ENCODE measurements at regions of chr1 and their contacts with region 1.

Region 1: GRCh38 chr1:163174524-163175437 is 27.9 kb downstream of the RGS5 start:
- DNase-seq: peak; percentile 73 to 76
- ATAC-seq: peak in 7 of 8 donors; percentile 68 to 80 (median 72)
- H3K4me3 ChIP-seq: peak overlapping the region in 6 of 10 donors; percentile 4 to 46 (median 21)
- H3K27ac ChIP-seq: peak overlapping the region in 8 of 10 donors; percentile 17 to 69 (median 52)
- H3K4me1 ChIP-seq: peaks cover 0 to 51% (median 8%) of the 10 kb centered on the region in 9 donors
- H3K27me3 ChIP-seq: no peaks in the 10 kb centered on the region
- CTCF ChIP-seq: peak; percentile 59 to 93 (median 88)

Region 2: GRCh38 chr1:162847839-162848453 is 326.8 kb before region 1 on chr1:
- intact Hi-C with region 1: loop called in 3 of 10 experiments (anchors 2 to 5 kb)
- DNase-seq: peak; percentile 75 to 77
- ATAC-seq: peak in 1 of 8 donors; percentile 39
- H3K4me3 ChIP-seq: no peak overlapping the region
- H3K27ac ChIP-seq: no peak overlapping the region
- H3K4me1 ChIP-seq: no peaks in the 10 kb centered on the region
- H3K27me3 ChIP-seq: peaks cover 0 to 3% (median 0%) of the 10 kb centered on the region in 7 donors
- CTCF ChIP-seq: peak; percentile 80 to 95 (median 92)

Region 3: DNA sequence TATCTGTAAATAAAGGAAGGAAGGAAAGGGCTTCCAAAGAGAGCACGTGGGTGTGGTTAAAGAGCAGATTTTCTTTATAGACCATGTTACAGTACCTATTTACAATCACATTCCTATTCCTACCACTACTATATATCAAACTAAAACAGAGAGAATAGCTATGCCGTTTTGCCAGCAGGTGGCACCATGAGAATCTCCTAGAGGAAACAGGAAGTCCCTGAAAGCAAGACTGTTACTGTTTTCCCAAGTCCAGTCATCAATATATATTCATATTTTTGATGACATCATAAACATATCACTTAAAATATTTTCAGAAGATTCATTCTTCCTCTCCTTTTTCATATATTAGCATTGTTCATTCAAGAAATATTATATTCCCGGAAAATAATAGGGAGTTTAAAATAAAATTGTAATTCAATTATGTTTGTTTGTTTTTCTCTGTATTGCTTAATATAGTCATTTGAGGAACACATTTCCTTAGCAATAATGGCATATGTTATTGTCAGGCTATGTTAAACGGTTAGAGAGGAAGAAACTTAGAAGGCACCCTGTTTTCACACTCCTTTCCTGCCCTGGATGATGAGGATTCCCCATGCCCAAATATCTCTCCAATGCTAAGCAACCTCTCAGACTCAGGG is 320.4 kb before region 1 on chr1:
- intact Hi-C with region 1: loop called in 4 of 10 experiments (anchors 2 to 5 kb)
- DNase-seq: peak; percentile 28 to 47
- ATAC-seq: peak in 4 of 8 donors; percentile 58 to 76 (median 70)
- H3K4me3 ChIP-seq: no peak overlapping the region
- H3K27ac ChIP-seq: no peak overlapping the region
- H3K4me1 ChIP-seq: no peaks in the 10 kb centered on the region
- H3K27me3 ChIP-seq: peaks cover 0 to 3% (median 0%) of the 10 kb centered on the region in 7 donors
- CTCF ChIP-seq: peak; percentile 43 to 84 (median 73)

Region 4: DNA sequence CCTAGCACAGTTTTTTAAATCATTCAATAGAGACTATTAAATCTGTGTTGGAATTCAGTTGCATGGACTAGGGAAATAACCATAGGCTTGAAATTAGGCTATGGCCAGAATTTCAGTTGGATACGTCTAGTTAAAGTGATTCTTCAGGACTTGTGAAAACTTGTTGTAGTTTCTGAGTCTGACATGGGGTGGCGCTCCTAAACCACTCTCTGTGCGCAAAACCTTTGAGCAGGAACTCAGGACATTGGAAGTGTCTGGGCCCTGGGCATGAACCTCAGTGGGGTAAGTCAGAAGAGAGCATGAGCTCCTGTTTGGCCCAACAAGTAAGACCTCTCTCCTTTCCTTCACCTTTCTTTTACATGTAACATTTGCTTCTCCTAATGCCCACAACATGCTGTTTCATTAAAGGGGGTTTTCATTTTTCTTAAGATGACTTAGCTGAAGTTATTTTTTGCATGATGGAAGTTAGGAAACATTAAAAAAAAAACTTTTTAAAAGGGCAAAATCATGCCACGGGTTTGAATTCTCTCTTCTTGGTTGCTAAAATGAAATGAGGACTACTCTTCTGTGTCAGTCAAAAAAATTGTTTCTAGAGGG is 296.7 kb before region 1 on chr1:
- intact Hi-C with region 1: loop called (anchors 1 to 5 kb)
- DNase-seq: peak; percentile 22 to 58
- ATAC-seq: peak; percentile 52 to 71 (median 68)
- H3K4me3 ChIP-seq: no peak overlapping the region
- H3K27ac ChIP-seq: no peak overlapping the region
- H3K4me1 ChIP-seq: no peaks in the 10 kb centered on the region
- H3K27me3 ChIP-seq: peaks cover 0 to 10% (median 0%) of the 10 kb centered on the region in 7 donors
- CTCF ChIP-seq: peak; percentile 50 to 79 (median 74)

Region 5: GRCh38 chr1:163071405-163072255 is 103.2 kb before region 1 on chr1:
- intact Hi-C with region 1: loop called in 9 of 10 experiments (anchors 2 to 5 kb)
- DNase-seq: peak; percentile 33 to 74
- ATAC-seq: peak in 4 of 8 donors; percentile 37 to 58 (median 44)
- H3K4me3 ChIP-seq: peak overlapping the region in 7 of 10 donors; percentile 21 to 55 (median 49)
- H3K27ac ChIP-seq: peak overlapping the region in 3 of 10 donors; percentile 33 to 42 (median 37)
- H3K4me1 ChIP-seq: peaks cover 0 to 7% (median 0%) of the 10 kb centered on the region in 9 donors
- H3K27me3 ChIP-seq: peaks cover 0 to 39% (median 4%) of the 10 kb centered on the region in 7 donors
- CTCF ChIP-seq: peak; percentile 23 to 75 (median 66)

Region 6: GRCh38 chr1:163315773-163316374 is 141.1 kb after region 1 on chr1:
- intact Hi-C with region 1: loop called in 6 of 10 experiments (anchors 5 to 10 kb)
- DNase-seq: peak in 1 of 2 donors; percentile 25
- ATAC-seq: no peak
- H3K4me3 ChIP-seq: no peak overlapping the region
- H3K27ac ChIP-seq: no peak overlapping the region
- H3K4me1 ChIP-seq: peaks cover 0 to 12% (median 6%) of the 10 kb centered on the region in 9 donors
- H3K27me3 ChIP-seq: no peaks in the 10 kb centered on the region
- CTCF ChIP-seq: peak; percentile 44 to 85 (median 75)

Measured in heart right ventricle (tissue), 16 donors.